CD4-positive, alpha-beta memory T cell (primary cell): ENCODE measurements at regions of chr16 and their contacts with region 1.

Region 1: GRCh38 chr16:84672276-84673202 is 24.2 kb downstream of the KLHL36 start:
- DNase-seq: peak; percentile 70 to 76 (median 73)
- H3K4me3 ChIP-seq: no peak overlapping the region
- H3K4me3 Mint-ChIP-seq: peak overlapping the region in 1 of 8 donors; percentile 23
- H3K27ac ChIP-seq: no peak overlapping the region
- H3K27ac Mint-ChIP-seq: peak overlapping the region in 3 of 7 donors; percentile 6 to 68 (median 57)
- H3K4me1 ChIP-seq: no peaks in the 10 kb centered on the region
- H3K4me1 Mint-ChIP-seq: peaks cover 5 to 17% (median 6%) of the 10 kb centered on the region in 4 donors
- H3K27me3 ChIP-seq: no peaks in the 10 kb centered on the region
- H3K27me3 Mint-ChIP-seq: peaks cover 0 to 4% of the 10 kb centered on the region in 2 donors

Region 2: GRCh38 chr16:84423416-84423837 is 249.1 kb before region 1 on chr16:
- CTCF ChIA-PET with region 1: no interaction called
- POLR2A ChIA-PET with region 1: no interaction called
- intact Hi-C with region 1: no loop called
- DNase-seq: peak in 2 of 5 donors; percentile 7 to 11
- H3K4me3 ChIP-seq: no peak overlapping the region
- H3K4me3 Mint-ChIP-seq: peak overlapping the region in 1 of 8 donors; percentile 14
- H3K27ac ChIP-seq: no peak overlapping the region
- H3K27ac Mint-ChIP-seq: no peak overlapping the region
- H3K4me1 ChIP-seq: no peaks in the 10 kb centered on the region
- H3K4me1 Mint-ChIP-seq: peaks cover 0 to 3% (median 0%) of the 10 kb centered on the region in 4 donors
- H3K27me3 ChIP-seq: no peaks in the 10 kb centered on the region
- H3K27me3 Mint-ChIP-seq: peaks cover 4 to 8% of the 10 kb centered on the region in 2 donors

Region 3: GRCh38 chr16:84683691-84684591 is 11.4 kb after region 1 on chr16:
- CTCF ChIA-PET with region 1: interaction called, 14 read pairs
- POLR2A ChIA-PET with region 1: no interaction called
- intact Hi-C with region 1: no loop called
- DNase-seq: no peak
- H3K4me3 ChIP-seq: no peak overlapping the region
- H3K4me3 Mint-ChIP-seq: no peak overlapping the region
- H3K27ac ChIP-seq: no peak overlapping the region
- H3K27ac Mint-ChIP-seq: no peak overlapping the region
- H3K4me1 ChIP-seq: no peaks in the 10 kb centered on the region
- H3K4me1 Mint-ChIP-seq: peaks cover 0 to 3% (median 0%) of the 10 kb centered on the region in 4 donors
- H3K27me3 ChIP-seq: no peaks in the 10 kb centered on the region
- H3K27me3 Mint-ChIP-seq: peaks cover 5 to 14% of the 10 kb centered on the region in 2 donors

Region 4: DNA sequence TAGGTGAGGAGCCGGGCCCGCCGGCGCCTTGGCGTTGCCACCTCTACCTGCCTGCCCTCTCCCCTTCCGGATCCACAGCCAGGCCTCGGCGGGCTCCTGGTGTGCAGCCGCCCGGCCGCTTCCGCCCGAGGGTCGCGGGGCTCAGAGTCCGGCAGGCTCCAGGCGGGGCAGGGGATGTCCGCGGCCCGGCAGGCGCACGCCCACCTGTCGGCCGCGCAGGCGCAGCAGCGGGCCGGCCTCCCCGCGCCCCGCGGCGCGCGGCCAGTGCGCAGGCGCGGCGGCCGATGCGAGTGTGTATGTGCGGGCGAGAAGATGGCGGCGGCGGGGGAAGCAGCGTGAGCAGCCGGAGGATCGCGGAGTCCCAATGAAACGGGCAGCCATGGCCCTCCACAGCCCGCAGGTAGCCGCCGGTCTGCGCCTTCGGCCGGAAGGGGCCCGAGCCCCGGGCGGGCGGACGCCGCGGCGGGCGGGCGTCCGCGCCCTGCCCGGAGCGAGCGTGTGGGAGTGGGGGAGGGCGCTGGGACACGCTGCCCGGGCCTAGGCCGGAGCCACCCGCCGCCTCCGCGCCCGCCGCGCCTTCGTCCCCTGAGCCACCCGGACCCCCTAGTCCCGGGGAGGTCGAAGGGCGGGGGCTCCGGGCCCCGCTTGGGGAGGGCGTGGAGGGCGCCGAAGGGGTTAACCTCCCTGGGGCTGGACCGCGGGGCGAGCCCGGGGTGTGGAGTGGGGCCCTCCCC is 27.3 kb after region 1 on chr16 and contains the start of gene USP10:
- CTCF ChIA-PET with region 1: interaction called, 13 read pairs
- POLR2A ChIA-PET with region 1: no interaction called
- intact Hi-C with region 1: no loop called
- DNase-seq: peak; percentile 83 to 91 (median 88)
- H3K4me3 ChIP-seq: peak within 1 kb of the TSS; percentile 78 to 86
- H3K4me3 Mint-ChIP-seq: peak within 1 kb of the TSS; percentile 95 to 100 (median 98)
- H3K27ac ChIP-seq: peak within 1 kb of the TSS; percentile 92
- H3K27ac Mint-ChIP-seq: peak within 1 kb of the TSS; percentile 93 to 99 (median 98)
- H3K4me1 ChIP-seq: peaks cover 47% of the 10 kb centered on the region
- H3K4me1 Mint-ChIP-seq: peaks cover 23 to 46% (median 35%) of the 10 kb centered on the region in 4 donors
- H3K27me3 ChIP-seq: no peaks in the 10 kb centered on the region
- H3K27me3 Mint-ChIP-seq: no peaks in the 10 kb centered on the region
- total RNA-seq, gene USP10: 89.0 to 93.2 TPM

Region 5: GRCh38 chr16:84726079-84726668 is 53.6 kb after region 1 on chr16:
- CTCF ChIA-PET with region 1: interaction called, 124 read pairs
- POLR2A ChIA-PET with region 1: interaction called, 4 read pairs
- intact Hi-C with region 1: loop called (anchors 1 kb)
- DNase-seq: peak; percentile 70 to 80 (median 76)
- H3K4me3 ChIP-seq: no peak overlapping the region
- H3K4me3 Mint-ChIP-seq: peak overlapping the region in 6 of 8 donors; percentile 33 to 76 (median 56)
- H3K27ac ChIP-seq: no peak overlapping the region
- H3K27ac Mint-ChIP-seq: peak overlapping the region in 4 of 7 donors; percentile 45 to 66 (median 52)
- H3K4me1 ChIP-seq: peaks cover 47% of the 10 kb centered on the region
- H3K4me1 Mint-ChIP-seq: peaks cover 40 to 67% (median 57%) of the 10 kb centered on the region in 4 donors
- H3K27me3 ChIP-seq: no peaks in the 10 kb centered on the region
- H3K27me3 Mint-ChIP-seq: no peaks in the 10 kb centered on the region